CD4-positive, alpha-beta memory T cell (primary cell): ENCODE measurements at regions of chr12 and their contacts with region 1.

Region 1: GRCh38 chr12:761256-761655 is 8.9 kb downstream of the WNK1 start:
- DNase-seq: no peak
- H3K4me3 ChIP-seq: no peak overlapping the region
- H3K4me3 Mint-ChIP-seq: peak overlapping the region in 6 of 8 donors; percentile 13 to 74 (median 39)
- H3K27ac ChIP-seq: peak overlapping the region; percentile 21
- H3K27ac Mint-ChIP-seq: peak overlapping the region in 6 of 7 donors; percentile 29 to 84 (median 76)
- H3K4me1 ChIP-seq: peaks cover 94% of the 10 kb centered on the region
- H3K4me1 Mint-ChIP-seq: peaks cover 35 to 83% (median 63%) of the 10 kb centered on the region in 4 donors
- H3K27me3 ChIP-seq: no peaks in the 10 kb centered on the region
- H3K27me3 Mint-ChIP-seq: no peaks in the 10 kb centered on the region

Region 2: DNA sequence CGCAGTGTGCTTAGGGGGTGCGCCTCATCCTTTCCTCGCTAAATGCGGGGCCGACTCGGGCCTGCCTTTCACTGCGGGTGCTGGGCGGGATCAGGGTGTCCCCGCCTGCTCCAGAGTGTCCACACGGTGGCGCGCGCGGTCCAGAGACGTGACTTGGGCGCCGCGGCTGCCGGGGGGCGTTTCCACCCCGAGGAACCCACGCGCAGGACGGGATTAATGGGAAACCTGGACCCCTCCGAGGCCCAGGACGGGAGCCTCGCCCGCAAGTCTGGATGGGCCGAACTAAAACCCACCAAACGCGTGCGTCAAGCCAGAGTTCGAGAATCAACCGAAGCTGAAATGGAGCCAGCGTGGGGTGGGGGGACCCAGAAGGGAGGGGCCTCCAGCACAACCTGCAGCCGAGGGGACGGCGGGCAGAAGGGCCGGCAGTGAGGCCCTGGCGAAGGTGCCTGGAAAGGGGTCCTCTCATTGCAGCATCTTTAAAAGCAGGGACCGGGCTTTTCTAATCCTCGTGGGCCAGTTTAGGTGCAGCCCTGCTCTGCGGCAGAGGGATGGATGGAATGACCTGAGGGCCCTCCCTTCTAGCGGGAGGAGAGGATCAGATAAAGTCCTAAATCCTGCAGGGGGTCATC is 191.3 kb before region 1 on chr12:
- CTCF ChIA-PET with region 1: no interaction called
- POLR2A ChIA-PET with region 1: no interaction called
- intact Hi-C with region 1: no loop called
- DNase-seq: peak; percentile 79 to 84 (median 82)
- H3K4me3 ChIP-seq: peak overlapping the region; percentile 52 to 65
- H3K4me3 Mint-ChIP-seq: peak overlapping the region; percentile 78 to 90 (median 86)
- H3K27ac ChIP-seq: peak overlapping the region; percentile 47
- H3K27ac Mint-ChIP-seq: peak overlapping the region in 6 of 7 donors; percentile 64 to 88 (median 80)
- H3K4me1 ChIP-seq: peaks cover 43% of the 10 kb centered on the region
- H3K4me1 Mint-ChIP-seq: peaks cover 35 to 54% (median 42%) of the 10 kb centered on the region in 4 donors
- H3K27me3 ChIP-seq: no peaks in the 10 kb centered on the region
- H3K27me3 Mint-ChIP-seq: no peaks in the 10 kb centered on the region

Region 3: GRCh38 chr12:779745-780734 is 18.8 kb after region 1 on chr12:
- CTCF ChIA-PET with region 1: interaction called, 7 read pairs
- POLR2A ChIA-PET with region 1: interaction called, 13 read pairs
- intact Hi-C with region 1: no loop called
- DNase-seq: no peak
- H3K4me3 ChIP-seq: peak overlapping the region in 1 of 2 donors; percentile 16
- H3K4me3 Mint-ChIP-seq: peak overlapping the region; percentile 78 to 94 (median 83)
- H3K27ac ChIP-seq: peak overlapping the region; percentile 16
- H3K27ac Mint-ChIP-seq: peak overlapping the region; percentile 76 to 93 (median 82)
- H3K4me1 ChIP-seq: peaks cover 81% of the 10 kb centered on the region
- H3K4me1 Mint-ChIP-seq: peaks cover 53 to 78% (median 64%) of the 10 kb centered on the region in 4 donors
- H3K27me3 ChIP-seq: no peaks in the 10 kb centered on the region
- H3K27me3 Mint-ChIP-seq: no peaks in the 10 kb centered on the region

Region 4: DNA sequence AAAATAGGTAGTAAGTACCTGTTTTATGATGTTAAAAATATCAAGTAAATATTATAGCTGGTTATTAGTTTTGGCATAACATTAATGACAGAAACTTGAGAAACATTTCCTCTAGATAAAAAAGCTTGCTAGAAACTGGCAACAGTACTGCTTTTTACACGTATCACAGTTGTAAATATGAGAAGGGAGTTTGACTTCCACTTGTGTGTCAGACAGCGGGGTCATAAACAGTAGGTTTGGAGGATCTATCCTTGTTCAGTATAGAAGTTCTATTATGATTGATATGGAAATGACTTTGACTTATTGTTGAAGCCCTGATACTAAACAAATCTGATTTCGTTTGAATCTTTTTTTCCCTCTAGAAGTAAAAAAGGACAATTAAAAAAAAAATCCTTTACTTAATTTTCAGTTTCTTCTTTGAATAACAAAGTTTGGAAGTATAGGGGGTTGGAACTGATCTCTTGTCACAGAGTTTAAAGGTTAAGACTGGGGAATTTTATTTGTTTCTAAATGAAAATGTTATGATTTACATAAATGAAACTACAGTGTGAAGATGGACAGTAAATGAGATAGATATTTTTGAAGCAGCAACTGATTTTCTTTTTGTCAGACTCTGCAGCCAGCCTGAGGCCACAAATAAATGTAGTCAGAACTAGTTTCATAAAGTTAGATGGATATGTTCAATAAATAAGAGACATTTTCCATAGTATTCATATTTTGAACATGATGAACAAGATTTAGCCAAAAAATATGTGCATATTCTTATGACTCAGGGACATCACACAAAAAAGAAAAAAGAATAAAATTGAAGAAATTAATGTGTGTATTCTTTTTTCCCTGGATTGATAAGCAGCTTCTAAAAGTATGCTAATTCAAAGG is 41.2 kb after region 1 on chr12:
- CTCF ChIA-PET with region 1: interaction called, 4 read pairs
- POLR2A ChIA-PET with region 1: interaction called, 10 read pairs
- intact Hi-C with region 1: no loop called
- DNase-seq: no peak
- H3K4me3 ChIP-seq: no peak overlapping the region
- H3K4me3 Mint-ChIP-seq: peak overlapping the region in 6 of 8 donors; percentile 11 to 66 (median 46)
- H3K27ac ChIP-seq: no peak overlapping the region
- H3K27ac Mint-ChIP-seq: peak overlapping the region; percentile 57 to 86 (median 77)
- H3K4me1 ChIP-seq: peaks cover 76% of the 10 kb centered on the region
- H3K4me1 Mint-ChIP-seq: peaks cover 51 to 79% (median 65%) of the 10 kb centered on the region in 4 donors
- H3K27me3 ChIP-seq: no peaks in the 10 kb centered on the region
- H3K27me3 Mint-ChIP-seq: no peaks in the 10 kb centered on the region

Region 5: DNA sequence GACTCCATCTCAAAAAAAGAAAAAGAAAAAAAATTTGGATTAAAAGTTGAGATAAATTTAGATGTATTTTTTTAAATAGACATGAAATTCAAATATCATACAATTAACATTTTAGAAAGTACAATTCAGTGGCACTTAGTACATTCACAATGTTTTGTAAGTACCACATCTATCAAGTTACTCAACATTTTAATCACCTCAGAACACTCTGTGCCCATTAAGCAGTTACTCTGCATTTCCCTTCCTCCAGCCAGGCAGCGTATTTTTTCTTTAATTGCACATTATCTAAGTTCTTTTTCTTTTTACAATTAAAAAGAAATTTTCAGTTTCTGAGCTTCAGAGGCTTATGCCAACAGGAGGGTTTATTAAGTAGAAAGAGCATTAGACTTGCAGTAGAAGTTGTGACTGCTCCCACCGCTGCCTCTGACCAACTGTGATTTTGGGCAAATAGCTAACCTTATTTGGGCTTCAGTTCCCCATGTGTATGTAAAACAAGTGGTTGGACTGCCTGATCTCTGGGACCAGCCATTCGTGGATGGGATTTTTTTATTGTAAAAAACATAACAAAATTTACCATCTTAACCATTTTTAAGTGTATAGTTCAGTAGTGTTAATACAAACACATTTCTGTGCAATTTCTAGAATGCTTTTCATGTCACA is 56.8 kb after region 1 on chr12:
- CTCF ChIA-PET with region 1: interaction called, 31 read pairs
- POLR2A ChIA-PET with region 1: interaction called, 6 read pairs
- intact Hi-C with region 1: no loop called
- DNase-seq: no peak
- H3K4me3 ChIP-seq: no peak overlapping the region
- H3K4me3 Mint-ChIP-seq: no peak overlapping the region
- H3K27ac ChIP-seq: no peak overlapping the region
- H3K27ac Mint-ChIP-seq: peak overlapping the region in 1 of 7 donors; percentile 4
- H3K4me1 ChIP-seq: peaks cover 49% of the 10 kb centered on the region
- H3K4me1 Mint-ChIP-seq: peaks cover 36 to 67% (median 55%) of the 10 kb centered on the region in 4 donors
- H3K27me3 ChIP-seq: no peaks in the 10 kb centered on the region
- H3K27me3 Mint-ChIP-seq: no peaks in the 10 kb centered on the region